HepG2 (cell line): ENCODE measurements at regions of chr19 and their contacts with region 1.

Region 1: DNA sequence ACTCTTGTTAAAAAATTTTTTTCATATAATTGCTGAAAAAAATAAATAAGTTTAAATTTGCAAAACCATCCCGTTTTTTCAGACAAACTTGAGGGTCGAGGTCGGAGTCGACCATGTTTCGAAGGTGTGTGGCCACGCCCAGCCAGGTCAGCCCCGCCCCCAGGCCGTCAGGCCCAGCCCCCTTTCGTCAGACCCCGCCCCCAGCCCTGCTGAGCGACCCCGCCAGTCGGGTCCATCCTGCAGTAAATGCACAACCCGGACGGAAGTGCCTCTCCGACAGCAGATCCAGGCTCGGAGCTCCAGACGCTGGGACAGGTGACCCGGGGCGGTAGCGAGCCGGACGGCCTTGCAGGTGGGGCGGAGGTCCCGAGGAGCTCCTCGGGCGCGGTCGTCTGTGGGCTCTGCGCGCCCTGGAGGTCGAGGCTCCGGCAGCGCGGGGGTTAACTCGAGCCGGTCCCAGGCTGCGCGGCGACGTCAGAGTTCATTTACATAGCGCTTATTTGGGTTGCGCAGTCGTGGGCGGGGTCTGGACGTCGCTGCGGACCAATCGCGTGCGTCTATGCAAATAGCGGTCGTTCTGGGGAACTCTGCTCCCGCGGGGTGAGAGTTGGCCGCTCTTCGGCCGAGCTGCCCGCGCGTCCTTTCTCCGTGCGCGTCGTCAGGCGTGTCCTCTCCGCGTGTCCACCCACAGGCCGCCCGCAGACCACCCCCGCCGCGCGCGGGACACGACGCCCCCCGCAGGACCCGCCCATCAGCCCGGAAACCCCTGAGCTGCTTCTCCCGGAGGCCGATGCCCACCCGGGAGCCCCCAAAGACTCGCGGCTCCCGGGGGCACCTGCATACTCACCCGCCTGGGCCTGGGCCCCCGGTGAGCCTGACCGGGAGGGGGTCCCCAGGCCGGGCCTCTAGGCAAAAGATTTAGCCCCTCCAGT is at the start of gene OCEL1:
- DNase-seq: peak; percentile 95
- ATAC-seq: peak; percentile 92
- H3K4me3 ChIP-seq: peak within 1 kb of the TSS; percentile 68 to 80 (median 79)
- H3K27ac ChIP-seq: peak within 1 kb of the TSS; percentile 94
- H3K4me1 ChIP-seq: peaks cover 23% of the 10 kb centered on the region
- H3K27me3 ChIP-seq: no peaks in the 10 kb centered on the region; a peak in 1 of 5 replicates
- CTCF ChIP-seq: peak; percentile 17; the same call in 1 of the 2 replicates
- EP300 ChIP-seq: no peak
- POLR2A ChIP-seq: peak; percentile 93 to 97
- RAD21 ChIP-seq: peak; percentile 38; the same call in 1 of the 2 replicates
- total RNA-seq, gene OCEL1: 10.6 and 13.6 TPM in 2 replicates

Region 2: DNA sequence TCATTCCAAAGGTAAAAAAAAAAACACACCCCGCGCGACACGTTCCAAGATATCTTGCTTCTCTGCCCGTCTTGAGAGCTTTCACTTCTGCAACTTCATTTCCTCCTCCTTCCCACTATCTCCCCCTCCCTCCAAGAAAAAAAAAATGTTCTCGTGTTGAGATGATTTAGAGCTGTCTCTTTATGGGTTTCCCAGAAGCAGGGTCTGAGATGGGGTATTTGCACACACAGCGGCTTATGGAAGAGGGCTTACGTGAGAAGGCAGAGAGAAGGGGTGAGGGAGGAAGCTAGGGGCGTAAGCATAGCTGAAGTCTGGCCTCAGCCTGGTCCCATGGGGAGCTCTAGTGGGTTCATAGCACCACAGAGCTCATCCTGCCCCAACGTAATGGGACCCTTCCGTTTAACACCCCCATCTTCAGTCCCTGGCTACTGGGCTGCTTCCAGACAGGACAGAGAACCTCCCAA is 42.4 kb before region 1 on chr19:
- CTCF ChIA-PET with region 1: no interaction called
- POLR2A ChIA-PET with region 1: no interaction called
- in situ Hi-C with region 1: no loop called
- intact Hi-C with region 1: no loop called
- DNase-seq: no peak
- ATAC-seq: no peak
- H3K4me3 ChIP-seq: no peak overlapping the region
- H3K27ac ChIP-seq: no peak overlapping the region
- H3K4me1 ChIP-seq: no peaks in the 10 kb centered on the region
- H3K27me3 ChIP-seq: no peaks in the 10 kb centered on the region
- CTCF ChIP-seq: no peak
- EP300 ChIP-seq: no peak
- POLR2A ChIP-seq: no peak
- RAD21 ChIP-seq: no peak

Region 3: DNA sequence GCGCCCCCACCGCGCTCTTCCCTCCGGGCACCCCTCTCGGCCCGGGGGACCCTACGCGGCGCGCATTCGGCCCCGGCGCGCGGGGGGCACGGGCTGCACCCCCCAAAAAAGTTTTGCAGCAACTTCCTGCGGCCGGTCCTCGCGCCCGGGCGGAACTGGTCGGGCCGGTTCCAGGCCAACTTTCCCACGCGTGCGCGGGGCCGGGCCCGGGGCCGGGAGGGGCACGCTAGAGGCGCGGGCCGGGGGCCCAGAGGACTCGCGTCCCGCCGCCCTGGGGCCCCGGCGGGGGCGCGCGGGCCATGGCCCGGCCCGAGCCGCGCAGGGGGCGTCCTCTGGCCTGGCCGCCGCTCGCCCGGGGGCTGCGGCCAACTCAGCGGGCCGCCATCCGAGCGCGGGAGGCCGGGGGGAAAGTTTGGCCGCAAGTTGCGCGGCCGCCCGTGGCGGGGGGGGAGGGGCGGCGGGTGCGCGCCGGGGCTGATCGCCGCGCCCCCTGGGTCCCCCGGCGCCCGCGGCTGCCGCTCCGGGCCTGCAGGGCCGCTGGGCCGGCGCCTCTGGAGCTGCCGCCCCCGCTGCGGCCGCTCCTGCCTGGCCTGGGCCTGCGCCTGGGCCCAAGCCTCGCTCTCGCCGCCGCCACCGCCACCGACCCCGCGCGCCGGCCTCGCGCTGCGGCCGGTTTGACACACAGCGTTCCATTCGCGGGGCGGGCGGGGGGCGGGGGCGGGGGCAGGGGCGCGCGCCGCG is 19.1 kb after region 1 on chr19 and contains the start of gene NR2F6:
- CTCF ChIA-PET with region 1: no interaction called
- POLR2A ChIA-PET with region 1: interaction called, 178 read pairs
- in situ Hi-C with region 1: no loop called
- intact Hi-C with region 1: loop called (anchors 2 kb)
- DNase-seq: no peak
- ATAC-seq: no peak
- H3K4me3 ChIP-seq: peak within 1 kb of the TSS; percentile 87 to 92 (median 89)
- H3K27ac ChIP-seq: peak within 1 kb of the TSS; percentile 95
- H3K4me1 ChIP-seq: peaks cover 73% of the 10 kb centered on the region
- H3K27me3 ChIP-seq: no peaks in the 10 kb centered on the region
- CTCF ChIP-seq: no peak
- EP300 ChIP-seq: no peak
- POLR2A ChIP-seq: peak in 1 of 2 experiments; percentile 73; a peak in 3 of 4 replicates
- RAD21 ChIP-seq: peak; percentile 19; the same call in 1 of the 2 replicates
- total RNA-seq, gene NR2F6: 54.1 and 72.4 TPM in 2 replicates

Region 4: GRCh38 chr19:17255150-17255621 is 28.9 kb after region 1 on chr19:
- CTCF ChIA-PET with region 1: no interaction called
- POLR2A ChIA-PET with region 1: interaction called, 52 read pairs
- in situ Hi-C with region 1: no loop called
- intact Hi-C with region 1: no loop called
- DNase-seq: peak; percentile 75
- ATAC-seq: peak; percentile 92
- H3K4me3 ChIP-seq: peak overlapping the region in 1 of 3 experiments; percentile 54; a peak in 2 of 6 replicates
- H3K27ac ChIP-seq: peak overlapping the region; percentile 24
- H3K4me1 ChIP-seq: peaks cover 33% of the 10 kb centered on the region
- H3K27me3 ChIP-seq: no peaks in the 10 kb centered on the region
- CTCF ChIP-seq: no peak; the same call in 1 of the 2 replicates
- EP300 ChIP-seq: no peak
- POLR2A ChIP-seq: no peak
- RAD21 ChIP-seq: no peak